Naive thymus-derived CD8-positive, alpha-beta T cell (primary cell): ENCODE measurements at regions of chr2 and their contacts with region 1.

Region 1: DNA sequence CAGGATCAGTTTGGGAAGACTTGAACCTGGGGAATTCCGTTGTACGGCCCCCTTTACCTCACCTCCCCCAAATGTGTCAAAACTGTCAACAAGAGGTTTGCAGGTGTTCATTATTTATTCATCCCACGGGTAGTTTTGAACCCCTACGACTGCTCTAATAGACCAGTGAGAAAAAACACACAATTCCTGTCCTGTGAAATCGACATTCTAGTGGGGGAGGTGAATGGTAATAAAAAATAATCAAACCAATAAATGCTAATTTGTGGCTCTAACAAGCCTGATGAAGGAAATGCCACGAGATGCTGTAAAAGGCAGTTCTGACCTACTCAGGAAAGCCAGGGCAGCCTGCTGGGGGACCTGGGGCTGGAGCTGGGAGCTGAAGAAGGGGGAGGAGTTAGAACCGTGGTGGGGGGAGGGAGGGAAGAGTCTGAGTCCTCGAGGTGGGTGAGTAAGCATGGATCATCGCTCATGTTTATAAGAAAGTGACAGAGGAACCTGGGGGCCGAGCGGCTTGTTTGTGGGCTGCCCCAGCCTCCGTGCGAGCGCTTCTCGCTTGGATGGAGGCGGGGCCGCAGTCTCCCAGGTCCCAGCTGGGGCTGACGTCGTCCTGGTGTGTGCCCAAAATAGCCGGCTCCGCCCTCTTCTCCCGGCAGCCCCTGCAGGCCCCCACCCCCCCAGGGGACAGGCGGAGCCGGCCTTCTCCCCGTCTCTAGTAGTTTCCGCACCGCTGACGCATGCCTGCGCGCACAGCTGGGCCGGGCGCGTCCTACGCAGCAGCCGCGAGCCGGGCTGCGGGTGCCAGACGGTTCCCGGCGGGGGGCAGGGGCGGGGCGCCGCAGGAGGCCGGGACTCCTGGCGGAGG is at the start of gene DNAJB2:
- DNase-seq: peak; percentile 92 to 99 (median 98)
- ATAC-seq: peak; percentile 81 to 87
- H3K4me3 Mint-ChIP-seq: peak within 1 kb of the TSS; percentile 89 to 99 (median 98)
- H3K27ac Mint-ChIP-seq: peak within 1 kb of the TSS; percentile 98 to 100 (median 100)
- H3K4me1 Mint-ChIP-seq: peaks cover 21 to 54% (median 50%) of the 10 kb centered on the region in 4 donors
- H3K27me3 Mint-ChIP-seq: peaks cover 0 to 2% (median 0%) of the 10 kb centered on the region in 5 donors
- polyA plus RNA-seq, gene DNAJB2: 5.0 to 6.6 (median 5.9) TPM

Region 2: DNA sequence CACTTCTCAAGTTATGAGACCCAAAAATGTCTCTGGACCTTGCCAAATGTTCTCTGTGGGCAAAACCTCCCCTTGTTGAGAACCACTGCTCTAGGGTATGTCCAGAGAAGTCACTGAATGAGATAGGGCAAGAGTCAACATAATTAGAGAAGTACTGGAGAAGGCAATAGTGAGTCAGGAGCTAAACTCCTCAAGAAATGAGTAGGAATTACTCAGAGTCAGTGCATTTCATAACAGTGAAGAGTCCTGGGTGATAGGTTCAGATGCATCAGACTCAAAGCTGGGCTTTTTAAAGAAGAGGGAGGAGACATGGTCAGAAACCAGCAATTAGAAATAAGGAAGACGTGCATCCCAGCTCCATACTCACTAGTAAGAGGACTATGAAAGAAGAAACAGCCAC is 179.6 kb before region 1 on chr2:
- POLR2A ChIA-PET with region 1: no interaction called
- DNase-seq: no peak
- ATAC-seq: no peak
- H3K4me3 Mint-ChIP-seq: no peak overlapping the region
- H3K27ac Mint-ChIP-seq: no peak overlapping the region
- H3K4me1 Mint-ChIP-seq: peaks cover 0 to 4% (median 3%) of the 10 kb centered on the region in 4 donors
- H3K27me3 Mint-ChIP-seq: no peaks in the 10 kb centered on the region

Region 3: GRCh38 chr2:219149667-219150066 is 129.2 kb before region 1 on chr2:
- POLR2A ChIA-PET with region 1: no interaction called
- DNase-seq: no peak
- ATAC-seq: no peak
- H3K4me3 Mint-ChIP-seq: no peak overlapping the region
- H3K27ac Mint-ChIP-seq: no peak overlapping the region
- H3K4me1 Mint-ChIP-seq: peaks cover 0 to 1% (median 0%) of the 10 kb centered on the region in 4 donors
- H3K27me3 Mint-ChIP-seq: no peaks in the 10 kb centered on the region

Region 4: DNA sequence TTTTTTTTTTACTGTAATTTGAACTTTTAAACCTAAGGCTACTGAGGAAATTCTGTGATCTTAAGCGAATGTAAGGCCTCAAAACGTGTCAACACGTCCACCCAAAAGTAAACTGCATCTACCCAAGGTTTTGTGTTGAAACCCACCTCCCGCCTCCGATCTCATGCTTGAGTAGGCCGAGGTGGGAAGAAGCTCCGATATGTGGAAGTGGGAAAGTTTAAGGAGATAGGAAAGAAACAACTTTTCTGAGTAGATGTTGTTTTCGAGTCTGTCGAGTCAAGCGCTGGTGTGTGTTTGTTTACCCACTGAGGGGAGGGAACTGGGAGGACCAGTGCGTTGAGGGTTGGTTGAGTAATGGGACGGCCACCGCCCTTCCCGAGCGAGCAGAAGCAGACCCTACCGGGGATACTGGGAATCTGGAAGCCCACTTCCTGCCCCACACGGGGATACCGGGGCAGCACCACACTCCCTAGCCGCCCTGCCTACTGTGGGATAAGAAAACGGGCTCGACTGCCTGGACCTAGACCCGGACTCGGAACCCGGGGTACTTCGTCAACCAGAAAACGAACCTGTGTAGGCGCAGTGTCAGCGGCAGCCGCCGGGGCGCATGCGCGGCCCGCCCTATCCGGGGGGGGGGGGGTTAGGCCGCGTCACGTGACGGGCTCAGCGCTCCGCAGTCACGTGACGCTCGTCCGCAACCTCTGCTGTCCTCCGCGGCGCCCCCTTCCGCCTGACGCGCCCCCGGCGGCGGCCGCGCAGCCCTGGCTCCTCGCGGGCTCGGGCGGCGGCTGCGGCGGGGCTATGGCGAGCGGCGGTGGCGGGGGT is 101.1 kb before region 1 on chr2 and contains the start of gene RETREG2:
- POLR2A ChIA-PET with region 1: interaction called, 33 read pairs
- DNase-seq: peak; percentile 69 to 91 (median 81)
- ATAC-seq: peak; percentile 51 to 55
- H3K4me3 Mint-ChIP-seq: peak within 1 kb of the TSS; percentile 90 to 98 (median 97)
- H3K27ac Mint-ChIP-seq: peak within 1 kb of the TSS; percentile 96 to 99 (median 98)
- H3K4me1 Mint-ChIP-seq: peaks cover 45 to 77% (median 75%) of the 10 kb centered on the region in 4 donors
- H3K27me3 Mint-ChIP-seq: no peaks in the 10 kb centered on the region
- polyA plus RNA-seq, gene RETREG2: 52.0 to 64.3 (median 57.6) TPM

Region 5: GRCh38 chr2:219213486-219214071 is 65.3 kb before region 1 on chr2:
- POLR2A ChIA-PET with region 1: interaction called, 10 read pairs
- DNase-seq: no peak
- ATAC-seq: no peak
- H3K4me3 Mint-ChIP-seq: peak overlapping the region in 1 of 10 donors; percentile 41
- H3K27ac Mint-ChIP-seq: peak overlapping the region in 2 of 10 donors; percentile 22 to 79
- H3K4me1 Mint-ChIP-seq: peaks cover 21 to 50% (median 44%) of the 10 kb centered on the region in 4 donors
- H3K27me3 Mint-ChIP-seq: no peaks in the 10 kb centered on the region

Region 6: GRCh38 chr2:219245148-219245898 is 33.6 kb before region 1 on chr2 and contains the starts of genes GLB1L and STK16:
- POLR2A ChIA-PET with region 1: interaction called, 170 read pairs
- DNase-seq: peak; percentile 70 to 92 (median 85)
- ATAC-seq: peak; percentile 61 to 62
- H3K4me3 Mint-ChIP-seq: peak within 1 kb of the TSS; percentile 84 to 100 (median 96)
- H3K27ac Mint-ChIP-seq: peak within 1 kb of the TSS; percentile 94 to 99 (median 98)
- H3K4me1 Mint-ChIP-seq: peaks cover 19 to 70% (median 69%) of the 10 kb centered on the region in 4 donors
- H3K27me3 Mint-ChIP-seq: no peaks in the 10 kb centered on the region
- polyA plus RNA-seq, gene GLB1L: 0.62 to 1.8 (median 1.7) TPM
- polyA plus RNA-seq, gene STK16: 21.6 to 25.8 (median 23.7) TPM

Region 7: GRCh38 chr2:219294356-219295351 is 15.8 kb after region 1 on chr2:
- POLR2A ChIA-PET with region 1: interaction called, 79 read pairs
- DNase-seq: peak; percentile 79 to 92 (median 90)
- ATAC-seq: peak; percentile 89 to 92
- H3K4me3 Mint-ChIP-seq: peak overlapping the region; percentile 62 to 82 (median 76)
- H3K27ac Mint-ChIP-seq: peak overlapping the region in 9 of 10 donors; percentile 32 to 93 (median 81)
- H3K4me1 Mint-ChIP-seq: peaks cover 13 to 44% (median 37%) of the 10 kb centered on the region in 4 donors
- H3K27me3 Mint-ChIP-seq: peaks cover 0 to 3% (median 0%) of the 10 kb centered on the region in 5 donors

Region 8: DNA sequence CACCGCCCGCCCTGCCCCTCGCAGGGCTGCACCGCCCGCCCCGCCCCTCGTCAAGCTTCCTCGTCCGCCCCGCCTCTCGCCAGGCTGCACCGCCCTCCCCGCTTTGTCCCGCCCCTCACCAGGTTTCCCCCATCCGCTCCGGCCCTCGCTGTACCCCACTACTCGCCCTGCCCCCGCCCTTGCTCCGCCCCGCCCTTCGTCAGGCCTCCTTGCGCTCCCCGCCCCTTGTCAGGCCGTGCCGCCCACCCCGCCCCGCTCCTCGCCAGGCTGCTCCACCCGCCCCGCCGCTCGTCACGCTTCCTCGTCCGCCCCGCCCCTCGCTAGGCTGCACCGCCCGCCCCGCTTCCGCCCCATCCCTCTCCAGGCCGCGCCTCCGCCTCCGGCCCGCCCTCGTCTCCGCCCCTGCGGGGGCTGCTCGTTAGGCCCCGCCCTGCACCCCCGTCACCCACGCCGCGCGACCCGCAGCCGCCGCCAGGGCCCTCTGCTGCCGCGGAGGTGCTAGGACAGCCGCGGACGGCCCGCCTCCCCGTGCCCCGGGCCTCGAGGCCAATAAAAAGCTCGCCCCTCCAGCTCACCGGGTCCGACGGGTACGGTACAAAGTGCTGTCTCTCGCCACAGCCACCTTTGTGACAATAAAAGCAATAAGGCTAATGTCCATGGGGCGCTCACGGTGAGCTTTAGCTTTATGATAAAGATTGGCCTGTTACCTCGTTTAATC is 109.4 kb after region 1 on chr2:
- POLR2A ChIA-PET with region 1: interaction called, 10 read pairs
- DNase-seq: peak; percentile 95 to 100 (median 99)
- ATAC-seq: peak; percentile 78 to 79
- H3K4me3 Mint-ChIP-seq: peak overlapping the region; percentile 63 to 97 (median 75)
- H3K27ac Mint-ChIP-seq: peak overlapping the region; percentile 25 to 96 (median 92)
- H3K4me1 Mint-ChIP-seq: peaks cover 4 to 36% (median 22%) of the 10 kb centered on the region in 4 donors
- H3K27me3 Mint-ChIP-seq: peaks cover 0 to 1% (median 0%) of the 10 kb centered on the region in 5 donors